A673 (cell line): ENCODE measurements at regions of chr5 and their contacts with region 1.

Region 1: DNA sequence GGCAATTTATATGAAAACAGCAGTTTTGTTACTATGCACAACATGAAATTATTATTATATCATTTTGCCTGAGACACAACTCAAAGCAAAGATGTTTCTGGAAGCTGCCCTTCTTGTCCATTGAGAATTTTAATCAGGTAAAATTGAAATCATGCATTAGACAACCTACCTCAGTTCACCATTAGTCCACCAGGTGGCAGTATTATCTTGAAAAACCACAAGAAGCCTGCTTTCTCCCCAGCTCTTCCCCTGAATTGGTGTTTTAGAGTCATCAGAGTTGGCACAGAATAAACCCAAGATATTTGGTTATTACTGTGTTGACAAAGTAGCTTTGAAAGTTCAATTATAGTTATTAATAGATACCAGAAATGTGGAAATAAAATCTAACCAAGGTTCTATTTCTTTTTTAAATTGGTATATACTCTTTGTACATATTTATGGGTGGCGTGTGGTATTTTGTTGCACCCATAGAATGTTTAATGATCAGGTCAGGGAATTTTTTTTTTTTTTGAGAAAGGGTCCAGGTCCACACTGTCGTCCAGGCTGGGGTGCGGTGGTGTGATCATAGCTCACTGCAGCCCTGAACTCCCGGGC is 25.7 kb downstream of the UTP15 start:
- DNase-seq: peak; percentile 84
- H3K4me3 ChIP-seq: no peak overlapping the region
- H3K27ac ChIP-seq: no peak overlapping the region
- H3K4me1 ChIP-seq: no peaks in the 10 kb centered on the region
- H3K27me3 ChIP-seq: no peaks in the 10 kb centered on the region
- CTCF ChIP-seq: peak; percentile 83

Region 2: GRCh38 chr5:72101828-72102227 is 1489.4 kb before region 1 on chr5:
- CTCF ChIA-PET with region 1: no interaction called
- POLR2A ChIA-PET with region 1: no interaction called
- intact Hi-C with region 1: no loop called
- DNase-seq: no peak
- H3K4me3 ChIP-seq: no peak overlapping the region
- H3K27ac ChIP-seq: no peak overlapping the region
- H3K4me1 ChIP-seq: peaks cover 3% of the 10 kb centered on the region
- H3K27me3 ChIP-seq: no peaks in the 10 kb centered on the region
- CTCF ChIP-seq: no peak

Region 3: DNA sequence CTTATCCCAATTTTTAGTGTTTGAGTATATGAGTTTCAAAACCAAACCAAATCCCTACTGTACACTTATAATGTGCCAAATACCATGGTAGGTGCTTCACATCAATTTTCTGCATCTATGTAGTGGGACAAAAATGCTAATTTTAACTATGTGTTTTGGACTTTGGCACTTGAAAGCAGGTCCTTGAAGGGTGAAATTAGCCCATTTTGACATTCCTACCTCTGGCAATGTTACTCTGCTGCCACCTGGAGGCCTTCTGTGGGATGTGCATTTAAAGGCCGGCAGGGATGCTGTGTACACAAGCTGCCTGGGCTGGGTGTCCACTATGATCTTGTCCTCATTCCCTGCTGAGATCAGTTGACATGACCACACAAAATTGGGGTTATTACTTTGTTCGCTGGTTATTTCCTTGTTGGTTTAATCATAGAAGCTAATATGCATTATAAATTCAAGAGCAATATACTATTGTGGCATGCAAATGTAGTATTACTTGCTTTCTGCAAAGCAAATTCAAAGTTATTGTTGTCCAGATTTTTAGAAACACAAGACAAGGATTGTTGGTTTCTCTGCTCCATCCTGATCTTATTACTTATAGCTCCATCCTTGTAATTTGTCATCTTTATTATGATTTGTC is 201.6 kb after region 1 on chr5:
- CTCF ChIA-PET with region 1: interaction called, 25 read pairs
- POLR2A ChIA-PET with region 1: interaction called, 8 read pairs
- intact Hi-C with region 1: loop called (anchors 1 kb)
- DNase-seq: peak; percentile 75
- H3K4me3 ChIP-seq: no peak overlapping the region
- H3K27ac ChIP-seq: no peak overlapping the region
- H3K4me1 ChIP-seq: peaks cover 20% of the 10 kb centered on the region
- H3K27me3 ChIP-seq: peaks cover 5% of the 10 kb centered on the region
- CTCF ChIP-seq: peak; percentile 93

Region 4: DNA sequence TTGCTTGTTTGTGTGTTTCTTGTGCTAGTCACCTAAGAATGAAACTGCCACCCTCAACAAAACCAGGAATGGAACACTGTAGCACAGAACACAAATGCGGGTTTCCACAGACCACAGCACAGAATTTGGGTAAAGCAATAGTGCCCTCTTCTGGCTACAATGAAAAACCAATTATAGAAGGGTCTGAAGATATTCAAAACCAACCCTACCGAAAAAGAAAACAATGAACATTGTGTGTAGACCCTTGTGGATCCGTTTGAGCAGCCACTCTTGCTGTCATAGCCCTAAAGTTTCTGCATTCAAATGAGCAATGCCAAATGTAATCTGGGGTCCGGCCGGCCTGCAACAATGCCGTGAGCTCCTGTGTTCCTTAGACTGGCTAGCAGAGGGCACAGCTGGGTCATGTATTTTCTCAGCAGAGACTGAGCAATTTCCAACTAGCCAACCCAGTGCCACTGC is 1057.7 kb after region 1 on chr5:
- CTCF ChIA-PET with region 1: interaction called, 3 read pairs
- POLR2A ChIA-PET with region 1: no interaction called
- intact Hi-C with region 1: loop called (anchors 2 kb)
- DNase-seq: peak; percentile 75
- H3K4me3 ChIP-seq: no peak overlapping the region
- H3K27ac ChIP-seq: no peak overlapping the region
- H3K4me1 ChIP-seq: no peaks in the 10 kb centered on the region
- H3K27me3 ChIP-seq: peaks cover 9% of the 10 kb centered on the region
- CTCF ChIP-seq: peak; percentile 74